Endothelial cell of umbilical vein (primary cell): ENCODE measurements at regions of chr1 and their contacts with region 1.

Region 1: DNA sequence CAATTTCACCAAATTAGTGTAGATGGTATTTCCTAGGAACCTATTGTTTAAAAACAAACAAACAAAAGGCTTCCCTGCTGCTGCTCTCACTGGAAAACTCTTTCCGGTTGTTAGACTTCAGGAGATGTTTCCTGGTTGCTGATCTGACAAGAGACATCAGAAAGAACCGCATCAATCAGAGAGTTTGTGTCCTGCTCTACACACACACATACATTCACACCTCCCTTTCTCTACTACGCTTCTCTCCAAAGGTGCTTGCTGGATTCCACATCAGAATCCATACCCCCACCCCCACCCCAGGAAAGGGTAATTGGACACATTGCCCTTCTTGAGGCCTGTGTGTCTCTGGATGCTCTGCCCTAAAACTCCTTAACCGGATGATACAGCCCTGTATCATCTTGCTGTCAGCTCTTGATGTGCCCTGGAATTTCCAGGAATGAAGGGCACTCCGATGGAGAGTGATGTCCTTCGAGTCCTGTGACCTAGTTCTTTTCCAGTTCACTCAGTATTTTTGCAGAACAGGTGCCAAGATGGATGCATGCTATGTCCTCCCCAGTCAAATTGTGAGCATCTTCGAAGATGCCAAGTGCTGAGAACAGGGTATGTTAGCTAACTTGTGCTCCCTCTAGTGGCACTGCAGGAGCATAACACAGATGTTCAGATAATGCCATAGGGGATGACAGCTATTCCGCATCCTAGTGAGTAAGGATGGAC is 113.7 kb upstream of the SLC35F3 start:
- DNase-seq: peak; percentile 41
- H3K4me3 ChIP-seq: no peak overlapping the region
- H3K27ac ChIP-seq: no peak overlapping the region
- H3K4me1 ChIP-seq: no peaks in the 10 kb centered on the region
- H3K27me3 ChIP-seq: no peaks in the 10 kb centered on the region
- CTCF ChIP-seq: peak; percentile 72 to 75
- POLR2A ChIP-seq: no peak

Region 2: DNA sequence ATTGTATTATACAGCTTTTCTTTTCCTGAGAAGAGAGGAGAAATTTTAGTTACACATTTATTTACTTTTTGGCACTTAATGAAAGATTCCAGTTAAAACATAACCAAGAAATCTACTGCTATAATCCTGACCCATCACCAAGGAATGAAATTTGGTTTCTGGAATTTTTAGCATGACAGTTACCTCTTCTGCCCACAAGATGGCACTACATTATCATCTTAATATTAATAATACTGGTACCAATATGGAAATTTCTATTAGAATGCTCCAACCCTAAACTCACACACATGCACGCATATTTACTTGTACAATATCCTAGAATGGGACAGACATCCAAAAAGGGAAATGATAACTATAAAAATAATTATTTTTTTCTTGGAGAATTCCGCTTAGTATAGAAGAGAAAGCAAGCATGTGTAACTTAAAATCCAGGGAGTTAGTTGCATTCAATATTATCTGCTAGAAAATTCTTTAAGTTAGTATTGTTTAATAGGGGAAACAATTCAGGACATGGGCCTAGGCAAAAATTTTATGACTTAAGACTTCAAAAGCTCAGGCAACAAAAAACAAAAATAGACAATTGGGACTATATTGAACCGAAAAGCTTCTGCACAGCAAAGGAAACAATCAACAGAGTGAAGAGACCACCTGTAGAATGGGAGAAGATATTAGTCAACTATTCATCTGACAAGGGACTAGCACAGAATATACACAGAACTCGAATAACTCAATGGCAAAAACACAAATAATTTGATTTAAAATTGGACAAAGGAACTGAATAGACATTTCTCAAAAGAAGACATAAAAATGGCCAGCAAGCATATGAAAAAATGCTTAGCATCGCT is 425.9 kb before region 1 on chr1:
- CTCF ChIA-PET with region 1: interaction called, 5 read pairs
- POLR2A ChIA-PET with region 1: no interaction called
- dilution Hi-C with region 1: no loop called
- intact Hi-C with region 1: loop called (anchors 1 kb)
- DNase-seq: peak; percentile 21
- H3K4me3 ChIP-seq: no peak overlapping the region
- H3K27ac ChIP-seq: no peak overlapping the region
- H3K4me1 ChIP-seq: no peaks in the 10 kb centered on the region
- H3K27me3 ChIP-seq: no peaks in the 10 kb centered on the region
- CTCF ChIP-seq: peak; percentile 35 to 41
- POLR2A ChIP-seq: no peak

Region 3: DNA sequence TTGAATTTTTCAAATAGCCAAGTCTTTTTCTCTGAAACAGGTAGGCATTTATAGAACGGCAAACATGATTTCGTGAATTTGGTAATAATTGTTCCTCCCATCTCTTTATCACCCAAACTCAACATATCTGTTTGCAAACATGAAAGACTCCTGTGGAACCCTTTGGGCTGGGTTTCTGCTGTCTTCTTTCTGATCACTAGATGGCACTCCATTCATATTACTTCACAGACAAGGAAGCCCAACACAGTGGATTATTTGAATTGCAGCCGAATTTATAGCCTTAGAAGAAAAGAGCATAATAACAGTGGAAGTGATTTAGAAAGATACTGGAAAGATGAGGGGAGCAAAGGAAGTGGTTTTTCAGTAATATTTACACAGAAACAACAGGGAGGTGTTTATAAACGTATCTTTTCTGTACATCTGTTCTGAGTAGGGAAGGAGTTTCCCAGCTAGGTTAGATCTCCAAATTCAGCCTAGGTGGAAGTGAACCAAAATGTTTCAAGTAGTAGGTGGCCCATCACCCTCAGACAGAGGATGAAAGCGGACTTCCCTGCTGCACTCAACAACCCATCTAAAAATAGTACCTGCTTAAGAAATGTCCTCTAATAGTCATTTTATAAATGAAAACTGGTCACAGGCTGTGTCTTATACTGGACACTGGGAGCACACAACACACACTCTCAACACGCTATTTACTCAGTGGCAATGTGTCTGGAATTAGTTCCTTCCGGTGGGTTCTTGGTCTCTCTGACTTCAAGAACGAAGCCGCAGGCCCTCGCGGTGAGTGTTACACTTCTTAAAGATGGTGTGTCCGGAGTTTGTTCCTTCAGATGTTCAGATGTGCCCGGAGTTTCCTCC is 395.7 kb before region 1 on chr1:
- CTCF ChIA-PET with region 1: interaction called, 9 read pairs
- POLR2A ChIA-PET with region 1: no interaction called
- dilution Hi-C with region 1: no loop called
- intact Hi-C with region 1: loop called (anchors 1 kb)
- DNase-seq: peak; percentile 59
- H3K4me3 ChIP-seq: no peak overlapping the region
- H3K27ac ChIP-seq: no peak overlapping the region
- H3K4me1 ChIP-seq: no peaks in the 10 kb centered on the region
- H3K27me3 ChIP-seq: peaks cover 0 to 2% of the 10 kb centered on the region in 2 experiments
- CTCF ChIP-seq: peak; percentile 40 to 64
- POLR2A ChIP-seq: no peak

Region 4: GRCh38 chr1:233440951-233441401 is 349.8 kb before region 1 on chr1:
- CTCF ChIA-PET with region 1: interaction called, 14 read pairs
- POLR2A ChIA-PET with region 1: no interaction called
- dilution Hi-C with region 1: no loop called
- intact Hi-C with region 1: loop called (anchors 1 kb)
- DNase-seq: peak; percentile 43
- H3K4me3 ChIP-seq: no peak overlapping the region
- H3K27ac ChIP-seq: no peak overlapping the region
- H3K4me1 ChIP-seq: no peaks in the 10 kb centered on the region
- H3K27me3 ChIP-seq: no peaks in the 10 kb centered on the region
- CTCF ChIP-seq: peak; percentile 50
- POLR2A ChIP-seq: no peak

Region 5: DNA sequence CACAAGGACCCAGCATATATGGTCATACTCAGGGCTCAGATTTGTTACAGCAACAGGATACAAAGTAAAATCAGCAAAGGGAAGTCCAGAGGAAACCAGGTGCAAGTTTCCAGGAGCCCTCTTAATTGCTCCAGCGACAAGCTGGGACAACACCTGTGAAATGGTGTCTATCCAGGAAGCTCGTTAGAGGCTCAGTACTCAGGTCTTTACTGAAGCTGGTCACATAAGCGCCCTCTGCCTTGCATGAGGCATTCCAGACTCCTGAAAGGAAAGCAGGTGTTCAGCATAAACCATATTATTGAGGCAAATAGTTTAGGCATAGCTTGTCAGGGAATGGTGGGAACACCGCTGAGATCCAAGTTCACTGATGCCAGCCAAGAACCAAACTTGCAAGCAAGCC is 344.7 kb after region 1 on chr1:
- CTCF ChIA-PET with region 1: no interaction called
- POLR2A ChIA-PET with region 1: no interaction called
- dilution Hi-C with region 1: no loop called
- intact Hi-C with region 1: no loop called
- DNase-seq: no peak
- H3K4me3 ChIP-seq: no peak overlapping the region
- H3K27ac ChIP-seq: no peak overlapping the region
- H3K4me1 ChIP-seq: no peaks in the 10 kb centered on the region
- H3K27me3 ChIP-seq: no peaks in the 10 kb centered on the region
- CTCF ChIP-seq: no peak
- POLR2A ChIP-seq: no peak